ENCODE measurements at regions of chr20 and their contacts with region 1.

Region 1: GRCh38 chr20:9068851-9069663 is at the start of gene PLCB4:
- DNase-seq: peak; percentile 42 to 56
- ATAC-seq: peak in 3 of 4 donors; percentile 26 to 45 (median 40)
- H3K4me3 ChIP-seq: peak within 1 kb of the TSS; percentile 80
- H3K27ac ChIP-seq: peak within 1 kb of the TSS; percentile 65
- H3K4me1 ChIP-seq: peaks cover 3% of the 10 kb centered on the region
- H3K27me3 ChIP-seq: peaks cover 0 to 21% (median 1%) of the 10 kb centered on the region in 3 donors
- CTCF ChIP-seq: no peak
- total RNA-seq, gene PLCB4: 2.1 to 6.7 (median 2.2) TPM

Region 2: DNA sequence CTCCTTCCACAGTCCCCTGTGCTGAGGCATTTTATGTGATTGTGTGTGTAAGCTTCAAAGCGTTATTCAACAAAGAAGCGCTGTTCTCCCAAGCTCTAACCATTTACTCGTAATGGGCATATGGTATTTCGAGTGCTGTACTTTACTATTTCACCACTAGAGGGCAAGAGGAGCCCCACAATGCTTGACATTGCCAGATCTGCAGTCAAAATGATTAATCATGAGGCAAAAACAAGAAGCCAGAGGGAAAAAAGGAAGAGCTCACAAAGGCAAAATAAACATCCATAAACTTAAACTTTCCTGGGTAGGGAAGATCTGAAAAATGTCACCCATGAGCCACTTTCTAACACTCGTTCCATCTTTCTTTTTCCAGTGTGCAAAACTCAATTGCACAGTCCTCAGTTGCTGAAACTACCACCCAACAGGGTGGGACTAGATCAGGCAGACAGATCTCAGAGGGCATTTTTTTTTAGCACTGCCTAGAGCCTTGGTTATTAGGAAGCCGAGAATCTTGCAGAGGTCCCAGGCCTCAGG is 215.2 kb before region 1 on chr20:
- intact Hi-C with region 1: loop called in 1 of 2 experiments (anchors 5 kb)
- DNase-seq: no peak
- ATAC-seq: peak; percentile 77 to 96 (median 86)
- H3K4me3 ChIP-seq: peak overlapping the region; percentile 45
- H3K27ac ChIP-seq: peak overlapping the region; percentile 50
- H3K4me1 ChIP-seq: peaks cover 8% of the 10 kb centered on the region
- H3K27me3 ChIP-seq: no peaks in the 10 kb centered on the region
- CTCF ChIP-seq: peak; percentile 94

Region 3: DNA sequence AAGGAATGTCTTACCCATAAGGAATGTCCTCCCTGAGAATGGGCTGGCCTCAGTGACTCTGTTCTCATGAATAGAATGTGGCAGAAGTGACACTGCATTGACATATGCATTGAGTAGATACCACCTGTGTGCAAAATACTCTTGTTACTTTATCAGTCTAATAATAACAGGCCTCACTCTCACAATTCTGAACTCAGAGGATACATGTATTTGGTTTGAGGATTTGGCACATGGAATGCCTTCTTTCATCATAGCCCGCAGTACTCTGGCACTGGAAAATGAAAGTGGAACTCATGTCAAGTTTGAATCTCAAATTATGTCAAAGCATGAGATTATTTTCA is 53.1 kb before region 1 on chr20:
- intact Hi-C with region 1: loop called in 1 of 2 experiments (anchors 10 kb)
- DNase-seq: no peak
- ATAC-seq: no peak
- H3K4me3 ChIP-seq: no peak overlapping the region
- H3K27ac ChIP-seq: no peak overlapping the region
- H3K4me1 ChIP-seq: no peaks in the 10 kb centered on the region
- H3K27me3 ChIP-seq: no peaks in the 10 kb centered on the region
- CTCF ChIP-seq: no peak

Region 4: DNA sequence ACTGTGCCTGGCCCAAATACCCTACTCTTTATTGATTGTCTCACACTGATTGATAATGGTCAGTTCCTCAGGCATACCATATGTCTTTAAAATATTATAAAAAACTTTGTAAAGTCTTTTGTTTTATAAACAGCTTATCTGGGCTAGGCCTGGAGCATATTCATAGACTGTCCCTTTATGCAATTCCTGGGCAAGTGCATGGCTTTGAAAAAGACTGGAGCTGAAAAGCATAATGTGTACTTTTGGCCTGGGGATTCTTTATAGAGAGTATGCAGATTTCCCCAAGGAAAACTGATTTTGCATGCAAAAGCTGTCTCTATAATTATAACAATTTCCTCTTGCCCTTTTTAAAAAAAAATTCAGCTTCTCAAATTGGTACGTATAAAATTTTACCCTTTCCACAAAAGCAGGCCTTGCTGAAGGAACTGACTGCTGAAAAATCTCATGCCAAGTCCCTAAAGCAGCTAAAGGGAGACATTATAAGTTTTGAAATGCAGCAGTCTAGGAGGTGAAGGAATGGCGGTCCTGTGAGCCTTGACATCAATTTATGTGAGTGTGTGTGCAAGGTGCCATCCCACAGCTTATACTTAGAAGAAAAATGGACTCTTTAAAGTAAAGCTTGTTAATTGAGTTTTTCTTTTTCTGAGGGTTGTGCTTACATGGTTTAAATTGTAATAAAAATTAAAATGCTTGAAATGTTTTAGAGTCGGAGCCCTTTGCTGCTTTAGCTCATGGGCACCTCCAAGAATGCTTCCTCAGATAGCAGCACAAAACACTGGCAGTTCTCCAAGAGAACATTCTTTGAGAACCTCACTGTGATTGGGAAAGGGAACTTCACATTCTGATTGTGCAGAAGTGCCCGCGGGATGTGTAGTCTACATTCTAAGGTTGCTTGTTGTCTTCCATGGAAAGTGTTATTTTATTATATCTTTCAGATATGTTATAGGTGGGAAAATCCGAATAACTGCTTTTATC is 43.8 kb after region 1 on chr20:
- intact Hi-C with region 1: no loop called
- DNase-seq: no peak
- ATAC-seq: peak in 1 of 4 donors; percentile 48
- H3K4me3 ChIP-seq: no peak overlapping the region
- H3K27ac ChIP-seq: no peak overlapping the region
- H3K4me1 ChIP-seq: no peaks in the 10 kb centered on the region
- H3K27me3 ChIP-seq: no peaks in the 10 kb centered on the region
- CTCF ChIP-seq: no peak

Region 5: GRCh38 chr20:9147547-9148024 is 78.5 kb after region 1 on chr20:
- intact Hi-C with region 1: no loop called
- DNase-seq: no peak
- ATAC-seq: no peak
- H3K4me3 ChIP-seq: no peak overlapping the region
- H3K27ac ChIP-seq: no peak overlapping the region
- H3K4me1 ChIP-seq: no peaks in the 10 kb centered on the region
- H3K27me3 ChIP-seq: no peaks in the 10 kb centered on the region
- CTCF ChIP-seq: no peak

Region 6: DNA sequence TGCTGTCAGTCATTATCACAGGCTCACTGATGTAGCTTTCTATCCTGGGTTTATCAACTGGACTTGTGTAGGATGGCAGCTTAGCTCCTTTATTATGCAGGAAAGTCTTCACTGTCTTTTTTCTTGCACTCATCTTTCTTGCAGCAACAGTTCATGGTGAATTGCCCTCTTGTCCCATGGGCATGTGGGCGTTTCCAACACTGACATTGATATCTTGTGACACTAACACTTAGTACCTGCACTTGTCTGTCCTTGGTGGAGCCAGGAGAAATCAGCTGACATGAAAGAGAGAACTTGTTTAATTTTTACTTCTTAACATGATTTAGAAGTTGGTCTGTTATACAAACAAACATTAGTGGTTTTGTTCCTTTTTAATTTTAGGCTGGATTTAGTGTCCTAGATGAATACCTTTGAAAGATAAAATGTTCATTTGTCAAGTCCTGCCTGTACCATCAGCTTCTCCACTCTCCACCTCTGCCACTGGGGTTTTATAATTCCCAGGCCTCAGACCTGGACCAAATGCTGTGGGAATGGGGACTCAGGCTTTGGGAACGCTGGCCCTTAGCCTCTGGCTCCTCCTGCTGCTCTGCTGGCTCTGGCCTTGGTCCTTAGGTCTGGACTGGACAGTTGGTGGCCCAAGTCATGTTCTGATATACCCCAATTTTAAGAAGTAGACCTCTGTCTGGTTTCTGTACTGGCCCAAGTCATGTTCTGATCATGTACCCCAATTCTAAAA is 284.3 kb after region 1 on chr20:
- intact Hi-C with region 1: loop called in 1 of 2 experiments (anchors 5 kb)
- DNase-seq: no peak
- ATAC-seq: no peak
- H3K4me3 ChIP-seq: no peak overlapping the region
- H3K27ac ChIP-seq: no peak overlapping the region
- H3K4me1 ChIP-seq: no peaks in the 10 kb centered on the region
- H3K27me3 ChIP-seq: no peaks in the 10 kb centered on the region
- CTCF ChIP-seq: no peak